Activated naive CD4-positive, alpha-beta T cell treated with anti-CD3 and anti-CD28 coated beads, Interleukin-2, amount 10 ng/mL, durations not matched to agents 7 days and 5 days (primary cell): ENCODE measurements at regions of chr16 and their contacts with region 1.

Region 1: DNA sequence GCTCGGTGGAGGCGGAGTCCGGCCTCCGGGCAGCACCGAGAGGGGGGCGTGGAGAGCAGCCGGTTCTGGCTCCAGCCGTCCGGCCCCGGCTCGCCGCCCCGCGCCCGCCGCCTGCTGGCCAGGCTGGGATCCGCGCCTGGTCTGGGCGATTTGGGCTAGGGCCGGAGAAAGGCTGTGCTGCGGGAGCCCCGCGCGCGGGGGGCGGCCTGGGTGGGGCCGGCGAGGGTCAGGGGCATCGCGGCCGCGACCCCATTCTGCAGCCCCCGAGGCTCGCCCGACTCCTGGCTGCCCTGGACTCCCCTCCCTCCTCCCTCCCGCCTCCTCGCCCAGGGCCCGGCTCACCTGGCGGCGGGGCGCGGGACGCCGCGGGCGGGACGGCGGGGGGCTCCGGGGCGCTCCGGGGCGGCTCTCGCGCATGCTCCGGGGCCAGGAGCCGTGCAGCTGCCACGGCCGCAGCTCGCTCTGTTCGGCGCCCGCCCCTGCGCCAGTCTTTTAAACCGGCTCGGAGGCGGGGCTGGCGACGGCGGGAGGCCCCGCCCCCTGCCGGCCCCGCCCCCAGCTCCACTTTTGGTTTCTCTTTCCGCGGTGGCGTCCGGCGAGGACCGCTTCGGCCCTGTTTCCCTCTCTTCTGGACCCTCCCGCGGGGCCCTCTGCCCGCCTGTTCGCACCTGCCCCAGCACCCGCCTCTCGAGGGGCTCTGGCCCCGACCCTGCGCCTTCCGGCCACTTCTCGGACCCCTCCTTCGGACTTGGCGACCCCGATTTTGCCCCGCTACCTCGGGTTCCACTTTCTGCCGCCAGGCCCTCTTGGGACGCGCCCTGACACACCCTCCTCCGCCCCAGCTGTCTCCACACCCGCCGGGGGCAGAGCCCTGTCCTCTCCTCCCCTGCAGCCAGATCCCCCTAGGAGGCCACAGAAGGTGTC is at the start of gene SOCS1:
- DNase-seq: peak; percentile 89
- H3K4me3 Mint-ChIP-seq: peak within 1 kb of the TSS; percentile 98
- H3K27ac Mint-ChIP-seq: peak within 1 kb of the TSS; percentile 94
- H3K4me1 Mint-ChIP-seq: peaks cover 59% of the 10 kb centered on the region
- H3K27me3 Mint-ChIP-seq: peaks cover 10% of the 10 kb centered on the region

Region 2: DNA sequence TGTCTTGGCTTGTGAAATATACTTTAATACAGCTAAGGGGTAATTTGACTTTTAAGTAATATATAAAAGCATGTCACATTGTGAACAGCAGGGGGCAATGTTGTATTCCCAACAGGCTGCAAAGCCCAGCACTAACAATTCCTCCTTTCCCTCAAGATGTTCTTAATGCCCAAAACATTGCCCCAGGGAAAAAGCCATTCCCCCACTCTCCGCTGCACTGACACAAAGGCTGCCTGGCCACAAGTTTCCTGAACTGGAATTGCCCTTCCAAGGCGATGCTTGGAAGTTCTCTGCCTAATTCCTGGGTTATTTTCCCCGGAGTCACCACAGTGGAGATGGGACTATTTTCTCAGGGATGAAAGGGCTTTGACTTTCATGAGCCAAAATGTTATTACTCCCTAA is 284.4 kb before region 1 on chr16:
- CTCF ChIA-PET with region 1: interaction called, 95 read pairs
- DNase-seq: peak; percentile 51
- H3K4me3 Mint-ChIP-seq: no peak overlapping the region
- H3K27ac Mint-ChIP-seq: peak overlapping the region; percentile 35
- H3K4me1 Mint-ChIP-seq: peaks cover 77% of the 10 kb centered on the region
- H3K27me3 Mint-ChIP-seq: no peaks in the 10 kb centered on the region

Region 3: DNA sequence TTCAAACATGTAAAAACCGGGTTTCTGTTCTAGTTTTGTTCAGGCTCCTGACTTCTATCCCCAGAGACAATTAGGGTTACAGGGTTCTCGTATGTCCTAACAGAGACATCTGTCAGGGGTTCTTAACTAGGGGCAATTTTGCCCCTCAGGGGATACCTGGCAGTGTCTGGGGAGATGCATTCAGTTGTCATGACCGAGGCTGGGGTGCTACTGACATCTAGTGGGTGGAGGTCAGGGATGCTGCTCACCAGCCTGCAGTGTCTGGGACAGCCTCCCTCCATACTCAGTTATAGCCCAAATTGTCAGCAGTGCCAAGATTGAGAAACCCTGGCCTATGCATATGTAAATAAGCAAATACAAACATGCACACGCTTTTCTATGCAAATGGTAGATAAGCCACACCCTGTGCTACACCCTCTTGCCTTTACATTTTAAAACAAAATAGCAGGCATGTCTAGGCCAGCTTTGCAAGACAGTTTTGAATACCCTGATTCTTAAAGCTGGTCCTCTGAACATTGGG is 274.2 kb before region 1 on chr16:
- CTCF ChIA-PET with region 1: interaction called, 12 read pairs
- DNase-seq: peak; percentile 73
- H3K4me3 Mint-ChIP-seq: no peak overlapping the region
- H3K27ac Mint-ChIP-seq: no peak overlapping the region
- H3K4me1 Mint-ChIP-seq: peaks cover 73% of the 10 kb centered on the region
- H3K27me3 Mint-ChIP-seq: no peaks in the 10 kb centered on the region

Region 4: GRCh38 chr16:11181899-11182279 is 74.1 kb before region 1 on chr16:
- CTCF ChIA-PET with region 1: no interaction called
- DNase-seq: no peak
- H3K4me3 Mint-ChIP-seq: no peak overlapping the region
- H3K27ac Mint-ChIP-seq: peak overlapping the region; percentile 28
- H3K4me1 Mint-ChIP-seq: peaks cover 31% of the 10 kb centered on the region
- H3K27me3 Mint-ChIP-seq: no peaks in the 10 kb centered on the region

Region 5: DNA sequence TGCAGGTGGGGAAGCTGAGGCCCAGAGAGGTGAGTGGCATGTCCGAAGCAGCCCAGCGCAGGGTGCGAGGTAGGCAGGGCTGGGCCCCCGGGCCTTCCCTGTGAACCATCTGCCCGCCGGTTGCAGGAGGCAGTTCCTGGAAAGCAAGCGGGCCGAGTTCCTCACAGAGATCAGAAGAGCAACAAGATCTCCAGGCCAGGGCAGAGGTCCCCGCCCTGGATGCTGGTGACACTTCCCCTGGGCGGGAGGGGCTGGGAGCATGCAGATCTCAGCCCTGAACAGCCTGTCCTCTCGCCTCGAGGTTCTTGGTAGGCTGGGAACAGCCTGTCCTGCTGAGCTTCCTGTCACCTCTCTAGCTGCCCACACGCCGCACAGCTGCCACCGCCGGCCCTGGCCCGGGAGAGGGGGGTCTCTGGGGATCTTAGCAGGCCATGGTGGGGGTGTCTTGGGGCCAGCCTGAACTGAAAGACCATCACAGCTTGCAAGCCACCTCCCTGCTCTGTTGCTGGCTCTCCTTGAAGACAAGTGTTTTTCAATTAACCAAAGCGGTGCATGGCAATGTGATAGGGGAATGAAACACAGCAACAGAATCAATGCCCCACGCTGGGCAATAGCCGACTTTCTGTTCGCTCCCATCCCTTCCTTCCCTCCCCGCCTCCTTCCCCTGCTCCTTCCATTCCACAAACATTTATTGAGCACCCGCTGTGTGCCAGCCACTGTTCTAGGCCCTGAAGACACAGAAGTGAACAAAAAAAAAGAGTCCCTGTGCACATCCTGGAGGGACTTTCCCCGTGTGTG is 31.7 kb before region 1 on chr16:
- CTCF ChIA-PET with region 1: interaction called, 16 read pairs
- DNase-seq: peak; percentile 88
- H3K4me3 Mint-ChIP-seq: peak overlapping the region; percentile 67
- H3K27ac Mint-ChIP-seq: peak overlapping the region; percentile 99
- H3K4me1 Mint-ChIP-seq: peaks cover 87% of the 10 kb centered on the region
- H3K27me3 Mint-ChIP-seq: no peaks in the 10 kb centered on the region

Region 6: DNA sequence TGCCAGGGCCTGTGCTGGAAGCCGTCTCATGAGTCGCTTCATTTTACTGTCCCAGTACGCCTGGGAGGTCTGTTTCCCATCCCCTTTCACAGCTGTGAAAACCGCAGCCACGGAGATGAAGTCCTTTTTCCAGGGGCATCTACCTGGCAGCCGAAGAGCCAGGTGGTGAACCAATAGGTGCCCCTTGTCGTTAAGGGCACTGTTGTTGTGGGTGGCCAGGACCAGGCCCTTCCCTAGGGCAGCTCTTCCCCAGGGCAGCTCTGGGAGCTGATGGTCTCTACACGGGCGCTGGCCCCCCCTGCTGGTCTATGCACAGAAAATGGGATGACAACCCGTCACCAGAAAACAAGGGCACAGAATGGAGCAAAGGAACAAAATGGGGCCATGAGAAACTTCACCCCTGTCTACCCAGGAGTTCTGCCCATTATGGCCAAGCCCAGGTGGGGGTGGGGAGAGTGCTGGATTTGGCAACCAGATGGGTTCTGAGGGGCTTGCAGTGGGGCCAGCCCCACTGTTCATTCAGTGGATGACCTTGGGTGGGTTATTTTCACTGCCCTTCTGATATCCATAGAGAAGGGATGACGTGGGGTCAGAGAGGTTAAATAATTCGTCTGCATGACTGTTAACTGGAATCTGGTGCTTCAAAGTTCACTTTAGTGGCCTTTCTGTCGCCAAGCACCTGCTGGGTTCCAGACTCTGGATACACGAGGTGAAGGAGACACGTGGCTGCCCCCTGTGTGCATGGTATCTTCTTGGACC is 100.8 kb after region 1 on chr16:
- CTCF ChIA-PET with region 1: interaction called, 132 read pairs
- DNase-seq: peak; percentile 73
- H3K4me3 Mint-ChIP-seq: peak overlapping the region; percentile 62
- H3K27ac Mint-ChIP-seq: peak overlapping the region; percentile 96
- H3K4me1 Mint-ChIP-seq: peaks cover 91% of the 10 kb centered on the region
- H3K27me3 Mint-ChIP-seq: peaks cover 47% of the 10 kb centered on the region

Region 7: DNA sequence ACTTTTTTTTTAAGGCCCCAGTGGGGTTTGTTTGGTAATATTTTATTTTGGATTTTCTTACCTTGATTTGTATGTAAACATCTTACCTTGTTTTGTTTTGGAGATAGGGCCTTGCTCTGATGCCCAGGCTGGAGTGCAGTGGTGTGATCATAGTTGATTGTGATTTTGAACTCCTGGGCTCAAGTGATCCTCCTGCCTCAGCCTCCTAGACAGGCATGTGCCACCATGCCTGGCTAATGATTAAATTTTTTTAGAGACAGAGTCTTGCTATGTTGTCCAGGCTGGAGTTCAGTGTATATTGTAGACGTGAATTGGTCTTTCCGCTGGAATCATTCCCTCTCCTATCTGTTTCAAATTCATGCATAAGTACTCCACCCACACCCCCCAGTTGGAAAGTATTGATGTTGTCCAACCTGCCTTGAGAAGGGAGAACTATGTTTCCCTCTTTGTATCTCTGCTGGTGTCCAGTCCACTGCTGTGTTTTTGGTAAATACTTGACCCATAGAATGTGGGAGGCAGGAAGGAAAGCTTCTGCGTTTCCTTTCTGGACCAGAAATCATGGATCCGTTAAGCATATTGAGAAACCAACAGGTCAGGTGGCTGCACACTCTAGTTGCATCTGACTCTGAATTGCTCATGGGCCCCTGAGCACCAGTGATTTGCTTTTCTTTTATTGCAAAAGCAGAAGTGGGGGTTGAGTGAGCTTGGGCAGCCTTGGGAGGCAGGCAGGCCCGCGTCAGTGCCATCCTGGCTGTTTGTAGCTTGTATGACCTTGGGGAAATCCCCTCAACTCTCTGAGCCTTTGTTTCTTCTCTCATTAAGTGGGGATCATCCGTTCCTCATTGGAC is 114.3 kb after region 1 on chr16:
- CTCF ChIA-PET with region 1: interaction called, 12 read pairs
- DNase-seq: peak; percentile 34
- H3K4me3 Mint-ChIP-seq: no peak overlapping the region
- H3K27ac Mint-ChIP-seq: no peak overlapping the region
- H3K4me1 Mint-ChIP-seq: peaks cover 22% of the 10 kb centered on the region
- H3K27me3 Mint-ChIP-seq: peaks cover 20% of the 10 kb centered on the region